ENCODE measurements at regions of chr2 and their contacts with region 1.

Region 1: DNA sequence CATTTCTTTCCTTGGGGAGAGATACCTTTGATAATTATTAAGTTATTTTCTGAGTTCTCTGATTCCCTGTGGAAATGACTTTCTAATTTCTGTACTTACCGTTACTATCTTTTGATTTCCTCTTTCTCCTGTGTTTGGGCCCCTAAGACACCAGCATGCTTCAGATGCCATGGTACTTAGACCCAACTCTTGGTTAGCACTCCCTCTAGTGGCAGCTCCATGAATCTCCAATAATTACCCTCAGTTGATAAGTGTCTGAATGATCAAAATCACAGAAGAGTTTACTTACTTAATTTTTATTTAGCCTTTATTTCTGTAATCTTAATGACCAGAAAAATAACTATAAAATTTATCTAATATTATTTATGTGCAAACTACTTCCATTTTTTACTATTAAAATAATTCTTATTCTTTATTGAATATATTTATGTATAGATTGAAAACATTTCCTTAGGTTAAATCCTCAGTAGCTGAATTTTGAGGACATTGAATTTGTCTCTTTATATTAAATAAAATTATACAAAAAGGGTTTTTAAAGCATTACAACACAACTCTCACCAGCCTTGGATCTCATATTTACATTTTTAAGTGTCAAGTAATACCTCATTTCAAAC is 300.4 kb downstream of the KCNS3 start:
- DNase-seq: no peak
- ATAC-seq: no peak
- H3K4me3 ChIP-seq: no peak overlapping the region
- H3K27ac ChIP-seq: no peak overlapping the region
- H3K4me1 ChIP-seq: no peaks in the 10 kb centered on the region
- H3K27me3 ChIP-seq: no peaks in the 10 kb centered on the region

Region 2: GRCh38 chr2:18132697-18133096 is 46.1 kb before region 1 on chr2:
- intact Hi-C with region 1: no loop called
- DNase-seq: no peak
- ATAC-seq: no peak
- H3K4me3 ChIP-seq: no peak overlapping the region
- H3K27ac ChIP-seq: no peak overlapping the region
- H3K4me1 ChIP-seq: no peaks in the 10 kb centered on the region
- H3K27me3 ChIP-seq: no peaks in the 10 kb centered on the region

Region 3: GRCh38 chr2:18378020-18378653 is 199.3 kb after region 1 on chr2:
- intact Hi-C with region 1: loop called in 1 of 2 experiments (anchors 5 kb)
- DNase-seq: no peak
- ATAC-seq: peak; percentile 77
- H3K4me3 ChIP-seq: no peak overlapping the region
- H3K27ac ChIP-seq: no peak overlapping the region
- H3K4me1 ChIP-seq: peaks cover 0 to 5% of the 10 kb centered on the region in 2 donors
- H3K27me3 ChIP-seq: no peaks in the 10 kb centered on the region